Ascending aorta (tissue), 2 donors: ENCODE measurements at regions of chr5 and their contacts with region 1.

Region 1: DNA sequence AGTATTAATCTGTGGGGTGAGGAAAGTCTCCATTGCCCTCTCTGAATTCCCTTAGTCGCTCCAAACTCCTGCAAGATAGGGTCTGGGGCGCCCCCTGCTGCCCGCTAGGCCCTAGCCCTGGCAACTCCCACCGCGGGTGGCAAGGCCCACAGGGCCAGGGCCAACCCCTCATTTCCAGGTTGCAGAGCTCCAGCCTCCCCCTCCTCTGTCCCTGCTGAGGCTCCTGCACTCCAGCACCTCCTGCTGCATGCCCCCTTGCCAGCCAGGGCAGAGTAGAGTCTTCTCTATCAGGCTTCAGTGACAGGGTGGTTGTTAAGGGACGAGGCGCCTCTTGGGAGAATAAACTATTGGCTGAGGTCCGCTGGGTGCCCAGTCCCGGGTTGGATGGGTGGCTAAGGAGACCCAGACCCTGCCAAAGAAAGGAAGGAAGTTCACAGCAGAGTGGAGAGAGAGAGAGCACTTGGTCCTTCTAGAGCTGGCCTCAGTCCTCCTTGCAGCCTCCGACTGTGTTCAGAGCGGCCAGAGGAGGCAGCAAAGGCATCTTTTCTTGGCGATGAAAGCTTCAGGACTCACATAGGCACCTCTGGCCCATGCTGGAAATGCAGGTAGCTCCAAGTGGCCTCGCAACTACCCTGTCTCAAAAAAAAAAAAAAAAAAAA is 45.6 kb downstream of the SAR1B start:
- DNase-seq: peak in 1 of 2 donors; percentile 94
- H3K4me3 ChIP-seq: peak overlapping the region in 1 of 2 donors; percentile 46
- H3K27ac ChIP-seq: peak overlapping the region; percentile 24 to 39
- H3K4me1 ChIP-seq: peaks cover 3 to 5% of the 10 kb centered on the region in 2 donors
- H3K27me3 ChIP-seq: no peaks in the 10 kb centered on the region
- CTCF ChIP-seq: peak; percentile 69 to 81 (median 81)

Region 2: GRCh38 chr5:134184155-134185135 is 402.6 kb before region 1 on chr5:
- intact Hi-C with region 1: loop called (anchors 5 kb)
- DNase-seq: peak in 1 of 2 donors; percentile 72
- H3K4me3 ChIP-seq: no peak overlapping the region
- H3K27ac ChIP-seq: no peak overlapping the region
- H3K4me1 ChIP-seq: no peaks in the 10 kb centered on the region
- H3K27me3 ChIP-seq: no peaks in the 10 kb centered on the region
- CTCF ChIP-seq: peak; percentile 78 to 87 (median 87)

Region 3: GRCh38 chr5:134304311-134304710 is 282.7 kb before region 1 on chr5:
- intact Hi-C with region 1: loop called (anchors 2 kb)
- DNase-seq: no peak
- H3K4me3 ChIP-seq: no peak overlapping the region
- H3K27ac ChIP-seq: no peak overlapping the region
- H3K4me1 ChIP-seq: no peaks in the 10 kb centered on the region
- H3K27me3 ChIP-seq: no peaks in the 10 kb centered on the region
- CTCF ChIP-seq: no peak

Region 4: GRCh38 chr5:135072387-135073281 is 485.6 kb after region 1 on chr5:
- intact Hi-C with region 1: no loop called
- DNase-seq: peak in 1 of 2 donors; percentile 42
- H3K4me3 ChIP-seq: no peak overlapping the region
- H3K27ac ChIP-seq: no peak overlapping the region
- H3K4me1 ChIP-seq: no peaks in the 10 kb centered on the region
- H3K27me3 ChIP-seq: no peaks in the 10 kb centered on the region
- CTCF ChIP-seq: no peak